CD8-positive, alpha-beta T cell (primary cell): ENCODE measurements at regions of chr1 and their contacts with region 1.

Region 1: DNA sequence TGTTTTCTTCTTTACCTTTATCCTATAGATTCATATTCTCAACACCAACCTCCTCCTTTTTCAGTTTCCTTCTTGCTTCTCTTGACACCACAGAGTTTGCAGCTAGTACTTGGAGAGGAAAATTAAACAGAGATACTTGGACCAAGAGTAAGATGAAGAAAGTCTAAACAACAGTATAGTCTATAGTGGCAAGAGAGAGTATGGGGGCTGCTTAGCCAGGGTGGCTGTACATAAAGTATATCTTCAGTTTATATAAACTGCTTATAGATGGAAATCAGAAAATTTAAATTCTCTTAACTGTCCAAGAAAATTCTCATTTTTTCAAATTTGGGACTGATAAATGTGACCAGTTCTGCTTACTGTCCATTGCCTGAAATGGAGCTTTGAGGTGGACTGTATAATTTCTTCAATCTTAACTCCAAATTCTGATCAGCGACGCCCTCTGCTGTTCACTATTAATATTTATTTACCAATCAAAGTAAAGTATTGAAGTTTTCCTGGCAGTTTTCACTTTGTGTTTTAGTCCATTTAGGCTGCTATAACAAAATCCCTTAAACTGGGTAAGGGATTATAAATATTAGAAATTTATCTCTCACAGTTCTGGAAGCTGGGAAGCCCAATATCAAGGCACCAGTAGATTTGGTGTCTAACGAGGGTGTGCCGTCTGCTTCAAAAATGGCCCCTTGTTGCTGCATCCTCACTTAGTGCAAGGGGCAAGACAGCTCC is 14.8 kb upstream of the METTL18 start:
- DNase-seq: peak in 3 of 9 experiments; percentile 34 to 59 (median 52)
- ATAC-seq: no peak
- H3K4me3 ChIP-seq: no peak overlapping the region
- H3K4me3 Mint-ChIP-seq: no peak overlapping the region
- H3K27ac ChIP-seq: no peak overlapping the region
- H3K27ac Mint-ChIP-seq: no peak overlapping the region
- H3K4me1 ChIP-seq: no peaks in the 10 kb centered on the region
- H3K4me1 Mint-ChIP-seq: peaks cover 2% of the 10 kb centered on the region
- H3K27me3 ChIP-seq: no peaks in the 10 kb centered on the region
- H3K27me3 Mint-ChIP-seq: no peaks in the 10 kb centered on the region
- CTCF ChIP-seq: peak; percentile 71

Region 2: GRCh38 chr1:168603501-168604110 is 1205.9 kb before region 1 on chr1:
- CTCF ChIA-PET with region 1: interaction called, 3 read pairs
- POLR2A ChIA-PET with region 1: no interaction called
- intact Hi-C with region 1: loop called (anchors 5 to 10 kb)
- DNase-seq: peak; percentile 38 to 78 (median 68)
- ATAC-seq: peak; percentile 67
- H3K4me3 ChIP-seq: no peak overlapping the region
- H3K4me3 Mint-ChIP-seq: no peak overlapping the region
- H3K27ac ChIP-seq: no peak overlapping the region
- H3K27ac Mint-ChIP-seq: no peak overlapping the region
- H3K4me1 ChIP-seq: no peaks in the 10 kb centered on the region
- H3K4me1 Mint-ChIP-seq: no peaks in the 10 kb centered on the region
- H3K27me3 ChIP-seq: no peaks in the 10 kb centered on the region
- H3K27me3 Mint-ChIP-seq: no peaks in the 10 kb centered on the region
- CTCF ChIP-seq: peak; percentile 63

Region 3: DNA sequence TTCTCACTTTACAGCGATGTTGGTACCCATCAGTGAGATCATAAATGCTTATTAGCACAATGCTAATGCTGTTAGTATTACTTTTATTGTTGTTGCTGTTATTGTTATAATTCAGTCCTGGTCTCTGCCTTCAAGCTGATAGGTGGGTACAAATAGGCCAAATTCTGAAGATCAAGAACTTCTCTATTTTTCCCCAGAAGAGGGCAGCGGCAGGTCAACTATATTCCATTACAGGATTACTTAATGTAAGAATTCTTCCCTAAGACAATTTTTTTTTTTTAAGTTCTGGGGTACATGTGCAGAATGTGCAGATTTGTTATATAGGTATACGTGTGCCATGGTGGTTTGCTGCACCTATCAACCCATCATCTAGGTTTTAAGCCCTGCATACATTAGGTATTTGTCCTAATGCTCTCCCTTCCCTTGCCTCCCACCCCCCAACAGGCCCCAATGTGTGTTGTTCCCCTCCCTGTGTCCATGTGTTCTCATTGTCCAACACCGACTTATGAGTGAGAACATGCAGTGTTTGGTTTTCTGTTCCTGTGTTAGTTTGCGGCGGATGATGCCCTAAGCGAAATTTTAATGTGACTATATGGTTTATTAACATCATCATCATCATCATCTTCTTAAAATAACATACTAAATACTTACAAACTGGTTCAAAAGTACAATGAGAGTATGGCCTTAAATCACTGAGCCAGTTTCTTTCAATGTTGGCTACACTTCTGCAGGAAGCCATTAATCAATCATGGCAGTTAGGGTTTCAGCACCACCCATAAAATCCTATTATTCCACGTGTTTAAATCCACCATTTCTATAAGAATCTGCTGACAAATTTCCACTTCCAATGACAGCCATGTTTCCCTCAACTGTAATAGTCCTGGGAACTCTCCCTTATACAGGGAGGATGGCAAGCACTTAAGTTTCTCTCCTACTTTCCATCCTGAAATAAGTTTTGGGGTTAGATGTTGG is 343.0 kb before region 1 on chr1:
- CTCF ChIA-PET with region 1: no interaction called
- POLR2A ChIA-PET with region 1: no interaction called
- intact Hi-C with region 1: loop called (anchors 5 to 10 kb)
- DNase-seq: peak in 3 of 9 experiments; percentile 16 to 49 (median 39)
- ATAC-seq: no peak
- H3K4me3 ChIP-seq: no peak overlapping the region
- H3K4me3 Mint-ChIP-seq: no peak overlapping the region
- H3K27ac ChIP-seq: no peak overlapping the region
- H3K27ac Mint-ChIP-seq: no peak overlapping the region
- H3K4me1 ChIP-seq: no peaks in the 10 kb centered on the region
- H3K4me1 Mint-ChIP-seq: peaks cover 4% of the 10 kb centered on the region
- H3K27me3 ChIP-seq: no peaks in the 10 kb centered on the region
- H3K27me3 Mint-ChIP-seq: no peaks in the 10 kb centered on the region
- CTCF ChIP-seq: peak; percentile 41

Region 4: DNA sequence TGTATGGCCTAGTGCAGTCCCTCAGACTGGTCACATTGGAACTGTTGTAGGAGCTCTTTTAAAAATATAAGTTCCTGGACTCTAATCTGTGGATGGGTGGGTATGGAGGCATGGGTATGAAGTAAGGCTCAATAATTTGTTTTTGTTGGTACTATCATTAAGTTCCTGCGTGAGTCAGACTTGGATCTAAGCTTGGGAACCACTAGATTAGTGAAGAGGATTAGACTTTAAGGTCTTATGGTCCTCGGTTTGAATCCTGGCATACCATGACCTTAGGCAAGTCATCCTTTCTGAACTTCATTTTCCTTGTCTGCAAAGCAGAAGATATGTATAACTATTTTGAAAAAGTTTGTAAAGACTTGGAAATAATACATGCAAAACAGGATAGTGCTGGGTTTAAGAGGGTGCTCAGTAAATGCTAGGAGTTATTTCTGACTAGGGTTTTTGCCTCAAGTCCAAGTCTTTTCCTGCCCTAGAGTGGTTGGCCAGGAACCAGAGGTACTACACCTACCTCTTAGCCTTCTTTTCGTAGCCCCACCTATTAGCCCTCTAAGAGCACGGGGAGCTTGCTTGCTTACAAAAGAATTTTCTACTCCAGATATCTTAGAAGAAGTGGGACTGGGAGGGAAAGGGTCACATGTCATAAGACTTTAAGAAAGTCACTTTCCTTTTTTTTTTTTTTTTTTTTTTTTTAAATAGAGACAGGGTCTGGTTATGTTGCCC is 23.8 kb after region 1 on chr1:
- CTCF ChIA-PET with region 1: no interaction called
- POLR2A ChIA-PET with region 1: no interaction called
- intact Hi-C with region 1: no loop called
- DNase-seq: no peak
- ATAC-seq: no peak
- H3K4me3 ChIP-seq: no peak overlapping the region
- H3K4me3 Mint-ChIP-seq: no peak overlapping the region
- H3K27ac ChIP-seq: no peak overlapping the region
- H3K27ac Mint-ChIP-seq: no peak overlapping the region
- H3K4me1 ChIP-seq: no peaks in the 10 kb centered on the region
- H3K4me1 Mint-ChIP-seq: no peaks in the 10 kb centered on the region
- H3K27me3 ChIP-seq: no peaks in the 10 kb centered on the region
- H3K27me3 Mint-ChIP-seq: no peaks in the 10 kb centered on the region
- CTCF ChIP-seq: no peak